ENCODE measurements at regions of chr2 and their contacts with region 1.

Region 1: GRCh38 chr2:230824406-230824978 is 40.2 kb upstream of the ITM2C start:
- DNase-seq: peak; percentile 86
- H3K4me3 Mint-ChIP-seq: peak overlapping the region; percentile 67
- H3K27ac Mint-ChIP-seq: no peak overlapping the region
- H3K4me1 Mint-ChIP-seq: peaks cover 5% of the 10 kb centered on the region
- H3K27me3 Mint-ChIP-seq: no peaks in the 10 kb centered on the region
- CTCF ChIP-seq: peak; percentile 53

Region 2: DNA sequence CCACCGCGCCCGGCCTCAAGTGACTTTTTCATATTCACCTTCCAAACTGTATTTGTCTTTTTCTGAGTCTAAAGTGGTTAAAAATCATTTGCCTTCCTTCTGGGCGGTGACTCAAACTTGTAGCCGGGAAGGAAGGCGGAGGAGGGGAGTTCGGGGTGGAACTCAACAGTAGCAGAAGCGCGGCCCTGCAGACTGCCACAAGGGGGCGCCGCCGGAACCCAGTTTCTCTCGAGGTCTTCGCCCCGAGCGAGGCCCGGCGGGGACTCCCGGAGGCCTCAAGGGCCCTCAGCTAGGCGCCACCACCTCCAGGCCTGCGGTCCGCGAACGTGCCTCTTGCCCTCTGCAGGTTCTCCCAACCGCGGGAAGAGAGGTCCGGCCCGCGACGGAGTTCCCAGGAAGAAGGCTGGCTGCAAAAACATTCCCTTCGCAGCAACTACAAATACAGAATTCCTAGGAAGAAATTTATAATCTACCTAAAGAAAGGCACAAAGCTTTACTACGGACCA is 23.4 kb after region 1 on chr2:
- CTCF ChIA-PET with region 1: interaction called, 6 read pairs
- POLR2A ChIA-PET with region 1: no interaction called
- intact Hi-C with region 1: loop called (anchors 1 kb)
- DNase-seq: peak; percentile 78
- H3K4me3 Mint-ChIP-seq: no peak overlapping the region
- H3K27ac Mint-ChIP-seq: no peak overlapping the region
- H3K4me1 Mint-ChIP-seq: peaks cover 11% of the 10 kb centered on the region
- H3K27me3 Mint-ChIP-seq: peaks cover 32% of the 10 kb centered on the region
- CTCF ChIP-seq: peak; percentile 65

Region 3: GRCh38 chr2:230895536-230896345 is 71.2 kb after region 1 on chr2:
- CTCF ChIA-PET with region 1: interaction called, 10 read pairs
- POLR2A ChIA-PET with region 1: interaction called, 5 read pairs
- intact Hi-C with region 1: no loop called
- DNase-seq: no peak
- H3K4me3 Mint-ChIP-seq: no peak overlapping the region
- H3K27ac Mint-ChIP-seq: no peak overlapping the region
- H3K4me1 Mint-ChIP-seq: no peaks in the 10 kb centered on the region
- H3K27me3 Mint-ChIP-seq: peaks cover 19% of the 10 kb centered on the region
- CTCF ChIP-seq: no peak

Region 4: GRCh38 chr2:230902180-230902899 is 77.8 kb after region 1 on chr2:
- CTCF ChIA-PET with region 1: interaction called, 16 read pairs
- POLR2A ChIA-PET with region 1: interaction called, 3 read pairs
- intact Hi-C with region 1: loop called (anchors 2 kb)
- DNase-seq: peak; percentile 75
- H3K4me3 Mint-ChIP-seq: no peak overlapping the region
- H3K27ac Mint-ChIP-seq: no peak overlapping the region
- H3K4me1 Mint-ChIP-seq: no peaks in the 10 kb centered on the region
- H3K27me3 Mint-ChIP-seq: peaks cover 33% of the 10 kb centered on the region
- CTCF ChIP-seq: peak; percentile 89

Region 5: DNA sequence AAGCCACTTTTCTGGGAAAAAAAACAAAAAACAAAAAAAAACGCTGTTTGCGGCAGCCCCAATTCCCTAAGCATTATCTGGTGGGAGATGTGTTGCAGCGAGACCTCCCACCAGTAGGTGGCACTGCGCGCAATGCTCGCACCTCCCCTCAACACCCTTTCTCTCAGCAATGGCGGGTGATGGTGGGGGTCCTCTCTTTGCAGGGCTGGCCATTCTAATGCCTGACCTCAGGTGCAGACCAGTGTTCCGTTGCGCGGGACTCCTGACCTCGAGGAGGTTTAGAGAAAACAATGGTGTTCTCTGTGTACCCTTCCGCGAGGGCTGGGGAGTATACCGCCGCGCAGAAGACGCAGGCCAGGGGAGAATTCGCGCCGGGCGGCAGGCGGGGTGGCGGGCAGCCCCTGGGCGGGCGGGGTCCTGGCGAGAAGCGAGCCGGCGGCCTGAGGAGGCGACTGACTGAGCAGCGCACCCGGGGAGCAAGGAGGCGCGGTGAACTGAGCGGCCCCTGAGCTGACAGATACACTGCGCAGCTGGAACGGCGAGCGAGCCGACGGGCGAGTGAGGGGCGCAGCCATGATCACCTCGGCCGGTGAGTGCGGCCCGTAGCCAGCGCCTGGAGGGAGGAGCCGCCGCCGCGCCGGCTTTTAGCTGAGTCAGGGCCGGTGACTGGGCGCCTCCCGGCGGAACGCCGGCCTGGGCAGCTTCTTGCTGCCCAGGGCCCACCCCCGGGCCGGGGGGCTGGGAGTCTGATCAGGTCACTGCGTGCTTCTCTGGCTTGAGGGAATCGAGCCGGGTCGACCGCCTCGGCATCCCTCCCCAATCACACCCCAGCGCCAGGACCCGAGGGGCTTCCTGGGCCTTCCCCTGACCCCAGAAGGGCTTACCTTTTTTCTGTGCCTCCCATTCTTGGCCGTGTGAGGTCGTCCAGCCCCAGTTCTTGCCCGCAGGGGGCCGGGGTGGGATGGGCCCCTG is 232.2 kb after region 1 on chr2 and contains the start of gene PSMD1:
- CTCF ChIA-PET with region 1: interaction called, 10 read pairs
- POLR2A ChIA-PET with region 1: interaction called, 3 read pairs
- intact Hi-C with region 1: loop called (anchors 2 kb)
- DNase-seq: peak; percentile 91
- H3K4me3 Mint-ChIP-seq: peak within 1 kb of the TSS; percentile 78
- H3K27ac Mint-ChIP-seq: peak within 1 kb of the TSS; percentile 97
- H3K4me1 Mint-ChIP-seq: peaks cover 36% of the 10 kb centered on the region
- H3K27me3 Mint-ChIP-seq: no peaks in the 10 kb centered on the region
- CTCF ChIP-seq: peak; percentile 90
- total RNA-seq, gene PSMD1: 88.5 and 94.4 TPM in 2 replicates

Measured in MCF 10A (cell line).